ENCODE measurements at regions of chr4 and their contacts with region 1.

Region 1: DNA sequence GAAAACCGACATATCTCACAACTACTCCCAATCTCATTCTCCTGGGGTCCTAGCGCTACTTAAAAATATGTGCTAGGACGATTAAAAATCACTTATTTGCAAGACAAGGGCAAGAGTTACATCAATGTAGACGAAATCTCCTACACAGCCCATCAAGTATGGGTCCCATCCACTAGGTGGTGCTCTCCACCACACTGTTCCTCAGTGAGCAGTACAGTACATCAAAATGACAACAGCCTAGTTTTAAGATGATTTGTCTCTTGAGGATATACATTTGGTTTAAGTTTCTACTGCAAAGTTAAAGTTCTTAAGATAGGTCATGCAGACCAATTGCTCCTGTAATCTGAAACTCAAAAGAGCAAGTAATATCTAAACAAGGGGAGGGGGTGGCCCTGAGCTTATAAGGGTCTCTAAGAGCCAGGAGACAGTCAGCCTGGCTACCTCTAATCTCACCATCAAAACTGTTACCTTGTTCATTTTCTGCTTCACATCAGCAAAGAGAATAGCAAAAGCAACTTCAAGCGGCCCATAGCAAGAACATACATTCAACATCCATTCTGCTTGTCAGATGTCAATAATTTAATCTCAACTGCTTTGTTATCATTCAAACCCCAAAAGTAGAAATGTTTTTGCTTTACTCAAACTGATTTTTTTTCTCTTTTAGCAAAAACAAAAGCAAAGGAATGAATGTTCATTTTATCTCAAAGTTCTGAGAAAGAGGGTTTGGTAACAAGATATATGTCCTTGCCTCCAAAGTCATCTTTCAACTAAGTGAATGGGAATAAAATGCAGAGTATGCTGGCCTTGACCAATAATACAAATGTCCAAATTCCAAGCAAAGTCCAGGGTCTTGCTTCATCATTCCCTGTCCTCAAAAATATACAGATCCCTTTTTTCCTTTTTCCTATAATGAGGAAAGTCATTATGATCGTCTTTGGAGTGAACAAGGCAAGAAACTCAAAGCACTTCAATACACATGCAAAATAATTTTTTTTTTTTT is 53.1 kb downstream of the STX18 start:
- DNase-seq: peak; percentile 86
- ATAC-seq: peak; percentile 86
- H3K4me3 Mint-ChIP-seq: no peak overlapping the region
- H3K27ac Mint-ChIP-seq: no peak overlapping the region
- H3K4me1 Mint-ChIP-seq: peaks cover 12% of the 10 kb centered on the region
- H3K27me3 Mint-ChIP-seq: no peaks in the 10 kb centered on the region

Region 2: GRCh38 chr4:3851211-3851610 is 637.5 kb before region 1 on chr4:
- CTCF ChIA-PET with region 1: no interaction called
- POLR2A ChIA-PET with region 1: no interaction called
- intact Hi-C with region 1: no loop called
- DNase-seq: no peak
- ATAC-seq: no peak
- H3K4me3 Mint-ChIP-seq: no peak overlapping the region
- H3K27ac Mint-ChIP-seq: no peak overlapping the region
- H3K4me1 Mint-ChIP-seq: no peaks in the 10 kb centered on the region
- H3K27me3 Mint-ChIP-seq: peaks cover 4% of the 10 kb centered on the region

Region 3: GRCh38 chr4:4248029-4248884 is 240.4 kb before region 1 on chr4 and contains the start of gene TMEM128:
- CTCF ChIA-PET with region 1: no interaction called
- POLR2A ChIA-PET with region 1: no interaction called
- intact Hi-C with region 1: loop called in 1 of 2 experiments (anchors 1 kb)
- DNase-seq: peak; percentile 95
- ATAC-seq: peak; percentile 98
- H3K4me3 Mint-ChIP-seq: peak within 1 kb of the TSS; percentile 98
- H3K27ac Mint-ChIP-seq: peak within 1 kb of the TSS; percentile 98
- H3K4me1 Mint-ChIP-seq: peaks cover 26% of the 10 kb centered on the region
- H3K27me3 Mint-ChIP-seq: no peaks in the 10 kb centered on the region
- total RNA-seq, gene TMEM128: 14.6 to 25.3 TPM

Region 4: GRCh38 chr4:4334798-4335520 is 153.7 kb before region 1 on chr4:
- CTCF ChIA-PET with region 1: no interaction called
- POLR2A ChIA-PET with region 1: no interaction called
- intact Hi-C with region 1: no loop called
- DNase-seq: peak; percentile 87
- ATAC-seq: peak; percentile 97
- H3K4me3 Mint-ChIP-seq: no peak overlapping the region
- H3K27ac Mint-ChIP-seq: no peak overlapping the region
- H3K4me1 Mint-ChIP-seq: peaks cover 1% of the 10 kb centered on the region
- H3K27me3 Mint-ChIP-seq: no peaks in the 10 kb centered on the region

Region 5: GRCh38 chr4:4541661-4542570 is 53.2 kb after region 1 on chr4 and contains the start of gene STX18:
- CTCF ChIA-PET with region 1: interaction called, 4 read pairs
- POLR2A ChIA-PET with region 1: no interaction called
- intact Hi-C with region 1: loop called in 1 of 2 experiments (anchors 1 kb)
- DNase-seq: peak; percentile 92
- ATAC-seq: peak; percentile 89
- H3K4me3 Mint-ChIP-seq: peak within 1 kb of the TSS; percentile 89
- H3K27ac Mint-ChIP-seq: peak within 1 kb of the TSS; percentile 90
- H3K4me1 Mint-ChIP-seq: peaks cover 45% of the 10 kb centered on the region
- H3K27me3 Mint-ChIP-seq: no peaks in the 10 kb centered on the region
- total RNA-seq, gene STX18: 25.3 to 33.5 TPM

Region 6: DNA sequence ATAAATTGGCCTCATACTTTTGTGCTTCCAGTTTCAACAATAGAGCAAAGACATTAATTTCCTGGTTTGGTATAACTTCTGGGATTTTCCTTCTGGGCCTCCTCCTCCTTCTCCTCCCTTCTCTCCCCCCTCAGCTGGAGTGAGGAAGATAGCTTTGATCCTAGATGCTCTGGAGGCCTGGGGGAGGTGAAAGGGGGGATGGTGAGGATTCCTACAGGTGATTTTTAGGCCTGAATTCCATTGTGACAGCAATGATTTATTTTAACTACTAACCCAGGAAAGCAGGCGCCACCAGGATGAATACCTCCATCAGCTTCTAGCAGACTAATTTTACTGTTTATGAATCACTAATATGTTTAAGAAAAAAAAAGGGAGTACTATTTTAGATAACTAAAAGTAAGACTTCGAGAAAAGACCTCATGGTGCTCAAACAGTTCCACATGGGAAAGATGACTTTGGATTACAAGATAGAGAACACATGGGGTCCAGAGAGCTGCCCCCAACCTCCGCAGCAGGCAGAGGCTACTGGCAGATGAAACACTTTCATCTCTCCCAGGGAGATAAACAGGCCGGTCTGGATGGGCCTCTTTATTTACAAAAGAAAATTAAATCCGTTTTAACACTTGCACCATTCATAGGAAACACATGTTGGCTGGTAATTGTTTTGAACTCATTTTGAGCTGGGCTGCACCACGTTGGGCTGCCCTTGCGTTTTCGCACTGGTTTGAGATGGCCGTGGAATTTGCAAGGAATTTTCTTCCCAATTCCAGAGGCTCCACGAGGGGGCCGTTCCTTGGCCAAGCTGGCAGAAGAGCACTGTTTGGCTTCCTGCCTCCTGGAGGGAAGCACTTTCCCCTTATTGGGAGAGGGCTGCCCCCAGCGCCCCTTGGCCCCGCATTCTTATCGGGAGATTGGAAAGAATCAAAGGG is 178.3 kb after region 1 on chr4:
- CTCF ChIA-PET with region 1: interaction called, 4 read pairs
- POLR2A ChIA-PET with region 1: no interaction called
- intact Hi-C with region 1: loop called in 1 of 2 experiments (anchors 5 kb)
- DNase-seq: no peak
- ATAC-seq: no peak
- H3K4me3 Mint-ChIP-seq: no peak overlapping the region
- H3K27ac Mint-ChIP-seq: no peak overlapping the region
- H3K4me1 Mint-ChIP-seq: no peaks in the 10 kb centered on the region
- H3K27me3 Mint-ChIP-seq: no peaks in the 10 kb centered on the region

Region 7: DNA sequence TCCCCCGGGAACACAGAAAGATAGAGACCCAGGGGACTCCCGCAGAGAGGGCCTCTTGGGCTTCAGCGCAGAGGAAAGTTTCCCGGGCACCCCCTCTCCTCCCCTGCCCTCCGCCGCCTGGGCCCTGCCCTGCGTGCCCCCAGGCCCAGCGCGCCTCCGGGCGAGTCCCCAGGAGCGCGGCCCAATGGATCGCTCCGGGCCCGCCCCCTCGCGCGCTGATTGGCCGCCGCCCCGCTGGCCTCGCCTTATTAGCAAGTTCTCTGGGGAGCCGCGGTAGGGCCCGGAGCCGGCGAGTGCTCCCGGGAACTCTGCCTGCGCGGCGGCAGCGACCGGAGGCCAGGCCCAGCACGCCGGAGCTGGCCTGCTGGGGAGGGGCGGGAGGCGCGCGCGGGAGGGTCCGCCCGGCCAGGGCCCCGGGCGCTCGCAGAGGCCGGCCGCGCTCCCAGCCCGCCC is 370.7 kb after region 1 on chr4 and contains the start of gene MSX1:
- CTCF ChIA-PET with region 1: interaction called, 4 read pairs
- POLR2A ChIA-PET with region 1: no interaction called
- intact Hi-C with region 1: loop called in 1 of 2 experiments (anchors 5 kb)
- DNase-seq: peak; percentile 76
- ATAC-seq: peak; percentile 86
- H3K4me3 Mint-ChIP-seq: peak within 1 kb of the TSS; percentile 38
- H3K27ac Mint-ChIP-seq: no peak within 1 kb of the TSS
- H3K4me1 Mint-ChIP-seq: peaks cover 40% of the 10 kb centered on the region
- H3K27me3 Mint-ChIP-seq: peaks cover 64% of the 10 kb centered on the region
- total RNA-seq, gene MSX1: 0.09 TPM in 1 of 2 experiments, not detected in the other

Region 8: GRCh38 chr4:4880492-4880891 is 391.8 kb after region 1 on chr4:
- CTCF ChIA-PET with region 1: no interaction called
- POLR2A ChIA-PET with region 1: no interaction called
- intact Hi-C with region 1: loop called in 1 of 2 experiments (anchors 1 kb)
- DNase-seq: no peak
- ATAC-seq: no peak
- H3K4me3 Mint-ChIP-seq: no peak overlapping the region
- H3K27ac Mint-ChIP-seq: no peak overlapping the region
- H3K4me1 Mint-ChIP-seq: no peaks in the 10 kb centered on the region
- H3K27me3 Mint-ChIP-seq: peaks cover 27% of the 10 kb centered on the region

Region 9: DNA sequence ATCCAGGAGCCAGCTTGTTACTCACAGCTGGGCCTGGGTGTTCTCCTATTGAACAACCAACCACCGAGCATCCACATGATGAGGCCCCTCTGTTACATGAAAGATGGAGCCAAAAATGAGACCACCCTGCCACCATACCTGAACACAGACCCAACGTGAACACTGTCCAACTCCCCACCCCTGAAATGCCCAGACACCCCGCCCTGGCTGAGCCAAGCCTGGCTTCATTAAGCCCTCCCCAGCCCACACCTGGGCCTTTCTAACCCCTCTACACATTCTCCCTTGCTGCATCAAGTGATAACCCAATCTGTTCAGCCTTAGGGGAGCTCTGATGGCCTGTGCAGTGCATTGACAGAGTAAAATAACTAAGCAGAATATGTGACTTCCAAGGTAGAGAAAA is 1302.9 kb after region 1 on chr4:
- CTCF ChIA-PET with region 1: no interaction called
- POLR2A ChIA-PET with region 1: no interaction called
- intact Hi-C with region 1: loop called in 1 of 2 experiments (anchors 5 kb)
- DNase-seq: no peak
- ATAC-seq: no peak
- H3K4me3 Mint-ChIP-seq: no peak overlapping the region
- H3K27ac Mint-ChIP-seq: no peak overlapping the region
- H3K4me1 Mint-ChIP-seq: no peaks in the 10 kb centered on the region
- H3K27me3 Mint-ChIP-seq: peaks cover 2% of the 10 kb centered on the region

Measured in activated CD4-positive, alpha-beta T cell treated with anti-CD3 and anti-CD28 coated beads for 36 hours (primary cell).